GM12878 (cell line): ENCODE measurements at regions of chr6 and their contacts with region 1.

Region 1: GRCh38 chr6:22372922-22373321 is 76.1 kb upstream of the PRL start:
- DNase-seq: peak; percentile 77
- ATAC-seq: peak; percentile 95
- H3K4me3 ChIP-seq: no peak overlapping the region
- H3K27ac ChIP-seq: peak overlapping the region; percentile 88
- H3K4me1 ChIP-seq: peaks cover 31% of the 10 kb centered on the region
- H3K27me3 ChIP-seq: no peaks in the 10 kb centered on the region
- CTCF ChIP-seq: no peak
- EP300 ChIP-seq: peak; percentile 82 to 92
- POLR2A ChIP-seq: no peak
- RAD21 ChIP-seq: 0 out of 2 replicates have a peak, but pooled peaks have one; percentile 17

Region 2: DNA sequence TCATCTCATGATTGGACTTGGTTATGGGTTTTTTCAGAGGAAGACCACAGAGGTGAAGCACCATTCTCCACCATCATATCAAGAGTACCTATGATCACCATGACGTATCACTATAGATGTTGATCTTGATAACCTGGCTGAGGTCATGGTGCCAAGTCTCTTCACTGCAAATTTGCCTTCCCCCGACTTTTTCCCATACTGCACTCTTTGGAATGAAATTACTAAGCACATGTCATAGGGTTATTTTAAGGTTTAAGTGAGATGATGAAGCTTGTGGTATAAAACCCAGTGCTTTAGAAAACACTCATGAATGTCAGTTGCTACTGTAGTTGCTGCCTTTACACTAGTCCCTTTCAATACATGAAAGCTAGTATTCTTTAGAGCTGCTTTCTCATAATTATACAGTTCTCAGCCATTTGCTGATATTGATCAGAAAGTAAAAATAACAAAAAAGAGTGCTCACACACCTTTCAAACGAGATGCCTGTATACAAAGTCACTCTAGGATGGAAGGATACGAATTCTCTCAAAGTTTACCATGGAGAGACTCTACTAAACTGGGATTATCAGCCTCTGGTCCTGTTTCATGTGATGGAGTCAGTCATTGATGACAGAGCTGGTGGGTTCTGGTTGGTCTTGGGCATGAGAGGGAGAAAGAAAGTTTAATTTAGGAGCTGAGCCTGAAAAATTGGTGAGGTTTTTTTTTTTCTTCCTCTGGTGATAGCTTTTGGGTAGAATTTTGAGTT is 304.2 kb before region 1 on chr6:
- CTCF ChIA-PET with region 1: no interaction called
- POLR2A ChIA-PET with region 1: no interaction called
- RAD21 ChIA-PET with region 1: no interaction called
- SMC1A ChIA-PET with region 1: no interaction called
- in situ Hi-C with region 1: no loop called
- intact Hi-C with region 1: loop called (anchors 5 kb)
- DNase-seq: peak; percentile 64
- ATAC-seq: peak; percentile 82
- H3K4me3 ChIP-seq: no peak overlapping the region
- H3K27ac ChIP-seq: peak overlapping the region; percentile 55
- H3K4me1 ChIP-seq: peaks cover 24% of the 10 kb centered on the region
- H3K27me3 ChIP-seq: no peaks in the 10 kb centered on the region
- CTCF ChIP-seq: no peak
- EP300 ChIP-seq: peak; percentile 65 to 71; a peak in 3 of 4 replicates
- POLR2A ChIP-seq: no peak
- RAD21 ChIP-seq: no peak

Region 3: GRCh38 chr6:23145801-23146200 is 772.9 kb after region 1 on chr6:
- CTCF ChIA-PET with region 1: no interaction called
- POLR2A ChIA-PET with region 1: no interaction called
- RAD21 ChIA-PET with region 1: no interaction called
- SMC1A ChIA-PET with region 1: no interaction called
- in situ Hi-C with region 1: no loop called
- intact Hi-C with region 1: no loop called
- DNase-seq: no peak
- ATAC-seq: no peak
- H3K4me3 ChIP-seq: no peak overlapping the region
- H3K27ac ChIP-seq: no peak overlapping the region
- H3K4me1 ChIP-seq: no peaks in the 10 kb centered on the region
- H3K27me3 ChIP-seq: no peaks in the 10 kb centered on the region
- CTCF ChIP-seq: no peak
- EP300 ChIP-seq: no peak
- POLR2A ChIP-seq: no peak
- RAD21 ChIP-seq: no peak